SK-N-SH (cell line): ENCODE measurements at regions of chr14 and their contacts with region 1.

Region 1: GRCh38 chr14:92922883-92923743 is at the start of gene CHGA:
- DNase-seq: peak; percentile 98
- H3K4me3 ChIP-seq: peak within 1 kb of the TSS in 1 of 2 experiments; percentile 56; a peak in 2 of 4 replicates
- H3K27ac ChIP-seq: peak within 1 kb of the TSS in 1 of 2 experiments; percentile 90; a peak in 2 of 4 replicates
- H3K4me1 ChIP-seq: peaks cover 0 to 70% of the 10 kb centered on the region in 2 experiments; a peak in 2 of 4 replicates
- H3K27me3 ChIP-seq: peaks cover 7% of the 10 kb centered on the region; the same call in 1 of the 2 replicates
- CTCF ChIP-seq: no peak
- EP300 ChIP-seq: no peak
- RAD21 ChIP-seq: no peak; the same call in 1 of the 2 replicates
- polyA plus RNA-seq, gene CHGA: 5.6 and 11.7 TPM in 2 replicates

Region 2: DNA sequence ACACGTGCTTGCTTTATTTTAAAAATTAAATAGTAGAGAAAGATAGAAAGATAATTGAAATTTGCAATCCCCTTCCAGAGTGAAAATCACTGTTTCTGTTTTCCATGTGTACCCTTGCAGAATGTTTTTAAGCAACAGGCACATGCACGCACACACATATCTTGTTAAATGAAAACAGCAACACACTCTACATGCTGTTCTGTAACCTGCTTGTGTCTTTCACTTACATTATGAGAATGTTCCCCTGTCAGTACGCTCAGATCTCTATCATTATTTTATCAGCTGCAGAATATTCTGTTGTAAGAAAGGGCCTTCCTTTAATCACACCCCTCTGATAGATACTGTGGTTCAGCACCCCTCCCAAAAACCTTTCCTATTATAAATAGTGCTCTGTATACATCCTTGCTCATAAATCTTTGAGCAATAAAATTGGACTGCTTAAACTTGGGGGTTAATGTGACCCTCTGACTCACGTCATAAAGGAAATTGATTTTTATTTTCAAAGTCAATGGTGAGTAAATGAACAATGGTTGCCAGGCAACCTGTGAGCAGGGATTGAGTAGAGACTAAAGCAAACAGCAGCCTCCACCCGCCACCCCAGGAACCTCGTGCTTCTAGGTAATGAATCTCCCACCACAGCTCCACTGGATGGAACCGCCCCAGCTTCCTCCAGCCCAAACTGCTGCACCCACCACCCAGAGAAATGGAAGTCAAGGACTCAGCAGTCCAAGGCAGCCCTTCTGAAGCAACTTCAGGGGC is 32.1 kb before region 1 on chr14:
- CTCF ChIA-PET with region 1: interaction called, 56 read pairs
- POLR2A ChIA-PET with region 1: interaction called, 288 read pairs
- DNase-seq: no peak
- H3K4me3 ChIP-seq: no peak overlapping the region
- H3K27ac ChIP-seq: peak overlapping the region in 1 of 2 experiments; percentile 81; a peak in 2 of 4 replicates
- H3K4me1 ChIP-seq: peaks cover 0 to 38% of the 10 kb centered on the region in 2 experiments; a peak in 2 of 4 replicates
- H3K27me3 ChIP-seq: no peaks in the 10 kb centered on the region; the same call in 1 of the 2 replicates
- CTCF ChIP-seq: no peak
- EP300 ChIP-seq: peak in 1 of 2 experiments; percentile 84; a peak in 2 of 4 replicates
- RAD21 ChIP-seq: peak; percentile 34; the same call in 1 of the 2 replicates

Region 3: GRCh38 chr14:92897922-92898565 is 25.1 kb before region 1 on chr14:
- CTCF ChIA-PET with region 1: interaction called, 3 read pairs
- POLR2A ChIA-PET with region 1: interaction called, 14 read pairs
- DNase-seq: no peak
- H3K4me3 ChIP-seq: no peak overlapping the region
- H3K27ac ChIP-seq: no peak overlapping the region
- H3K4me1 ChIP-seq: peaks cover 0 to 4% of the 10 kb centered on the region in 2 experiments; a peak in 1 of 4 replicates
- H3K27me3 ChIP-seq: no peaks in the 10 kb centered on the region
- CTCF ChIP-seq: no peak
- EP300 ChIP-seq: no peak
- RAD21 ChIP-seq: no peak

Region 4: GRCh38 chr14:92906823-92907222 is 16.3 kb before region 1 on chr14:
- CTCF ChIA-PET with region 1: no interaction called
- POLR2A ChIA-PET with region 1: interaction called, 23 read pairs
- DNase-seq: peak; percentile 75
- H3K4me3 ChIP-seq: no peak overlapping the region
- H3K27ac ChIP-seq: peak overlapping the region in 1 of 2 experiments; percentile 93; a peak in 2 of 4 replicates
- H3K4me1 ChIP-seq: peaks cover 0 to 19% of the 10 kb centered on the region in 2 experiments; a peak in 1 of 4 replicates
- H3K27me3 ChIP-seq: no peaks in the 10 kb centered on the region
- CTCF ChIP-seq: no peak
- EP300 ChIP-seq: peak in 1 of 2 experiments; percentile 91; a peak in 2 of 4 replicates
- RAD21 ChIP-seq: peak; percentile 37